ENCODE measurements at regions of chr2 and their contacts with region 1.

Region 1: DNA sequence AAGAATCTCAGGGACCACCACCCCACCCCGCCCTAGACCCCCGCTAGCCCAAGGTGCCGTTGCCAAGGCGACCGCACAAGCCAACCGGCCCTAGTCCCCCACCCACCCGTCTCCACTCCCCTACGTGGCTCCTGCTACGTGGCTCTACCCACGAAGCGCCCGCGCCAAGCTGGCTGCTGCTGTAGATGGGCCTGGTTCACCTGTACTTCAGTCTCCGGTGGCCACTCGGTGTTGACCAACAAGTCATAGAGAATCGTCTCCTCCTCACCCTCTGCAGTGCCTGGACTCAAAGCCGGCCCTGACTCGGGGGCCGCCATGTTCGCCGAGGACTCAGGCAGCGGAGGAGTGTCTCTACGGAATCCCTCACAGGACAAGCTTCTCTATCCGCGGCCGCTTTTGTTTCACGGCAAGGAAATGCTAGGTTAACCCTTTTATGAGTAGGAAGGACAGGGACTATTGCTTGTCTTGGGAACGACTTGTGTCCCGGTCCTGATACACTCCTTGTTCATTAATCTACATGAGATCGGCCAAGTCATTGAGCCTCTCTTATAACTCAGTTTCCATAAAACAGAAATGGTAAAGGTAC is at the start of gene NBAS:
- DNase-seq: peak; percentile 83 to 93
- ATAC-seq: peak; percentile 95 to 99 (median 97)
- H3K4me3 ChIP-seq: peak within 1 kb of the TSS; percentile 60 to 90 (median 78)
- H3K27ac ChIP-seq: peak within 1 kb of the TSS in 9 of 10 donors; percentile 67 to 87 (median 73)
- H3K4me1 ChIP-seq: peaks cover 0 to 37% (median 27%) of the 10 kb centered on the region in 9 donors
- H3K27me3 ChIP-seq: peaks cover 0 to 6% (median 0%) of the 10 kb centered on the region in 7 donors
- CTCF ChIP-seq: no peak
- total RNA-seq, gene NBAS: 46.7 to 79.1 (median 57.2) TPM

Region 2: GRCh38 chr2:13768274-13768673 is 1792.8 kb before region 1 on chr2:
- intact Hi-C with region 1: loop called in 1 of 10 experiments (anchors 10 kb)
- DNase-seq: no peak
- ATAC-seq: no peak
- H3K4me3 ChIP-seq: no peak overlapping the region
- H3K27ac ChIP-seq: no peak overlapping the region
- H3K4me1 ChIP-seq: no peaks in the 10 kb centered on the region
- H3K27me3 ChIP-seq: no peaks in the 10 kb centered on the region
- CTCF ChIP-seq: no peak

Region 3: GRCh38 chr2:15591692-15592463 is 30.8 kb after region 1 on chr2 and contains the start of gene DDX1:
- intact Hi-C with region 1: loop called in 2 of 10 experiments (anchors 2 kb)
- DNase-seq: peak; percentile 79 to 85
- ATAC-seq: peak; percentile 92 to 96 (median 94)
- H3K4me3 ChIP-seq: peak within 1 kb of the TSS; percentile 74 to 99 (median 92)
- H3K27ac ChIP-seq: peak within 1 kb of the TSS; percentile 78 to 98 (median 96)
- H3K4me1 ChIP-seq: peaks cover 2 to 41% (median 27%) of the 10 kb centered on the region in 9 donors
- H3K27me3 ChIP-seq: no peaks in the 10 kb centered on the region
- CTCF ChIP-seq: no peak
- total RNA-seq, gene DDX1: 104 to 183 (median 167) TPM